ENCODE measurements at regions of chr19 and their contacts with region 1.

Region 1: DNA sequence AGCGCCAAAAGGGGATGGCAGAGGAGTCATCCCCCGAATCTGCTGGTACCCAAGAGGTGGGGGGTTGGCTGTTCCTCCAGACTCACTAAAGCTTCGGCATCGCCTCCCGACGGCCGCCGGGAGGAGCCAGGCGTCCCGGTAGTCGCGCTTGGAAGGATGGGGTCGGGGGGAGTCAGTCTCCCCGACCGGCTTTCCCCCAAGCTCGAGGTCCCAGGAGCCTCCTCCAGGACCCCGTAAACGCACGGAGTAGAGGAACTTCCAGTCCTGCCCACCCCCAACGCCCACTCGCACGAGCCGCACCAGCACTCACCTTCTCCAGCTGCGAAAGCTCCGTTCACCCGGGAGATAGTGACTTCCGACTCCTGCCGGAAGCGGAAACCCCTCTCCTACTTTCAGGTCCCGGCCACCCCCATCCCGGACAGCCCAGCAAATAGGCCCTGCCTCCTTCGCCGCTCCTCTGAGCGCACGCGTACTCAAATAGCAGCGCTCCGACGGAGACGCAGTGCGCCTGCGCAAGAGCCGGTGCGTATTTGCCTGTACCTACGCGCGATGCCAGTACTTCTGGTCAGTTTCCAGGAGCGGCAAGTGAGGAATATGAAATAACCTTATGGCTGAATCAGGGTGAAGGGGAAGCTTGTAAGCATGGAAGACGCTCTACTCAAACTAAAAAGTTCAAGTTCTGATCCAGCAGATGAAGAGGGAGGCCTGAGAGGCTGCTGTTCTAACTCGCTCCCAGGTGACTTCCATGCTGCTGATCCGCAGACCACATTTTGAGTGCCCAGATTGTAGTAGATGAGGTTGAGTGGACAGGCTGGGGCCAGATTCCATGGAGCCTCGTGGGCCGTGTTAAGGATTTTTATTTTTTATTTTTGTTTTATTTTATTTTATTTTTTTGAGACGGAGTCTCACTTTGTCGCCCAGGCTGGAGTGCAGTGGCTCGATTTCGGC is at the start of gene ELOF1:
- DNase-seq: peak; percentile 97 to 98 (median 98)
- H3K4me3 ChIP-seq: peak within 1 kb of the TSS; percentile 72 to 95 (median 88)
- H3K27ac ChIP-seq: peak within 1 kb of the TSS in 1 of 2 experiments; percentile 76
- H3K4me1 ChIP-seq: peaks cover 0 to 31% (median 21%) of the 10 kb centered on the region in 4 experiments
- H3K27me3 ChIP-seq: no peaks in the 10 kb centered on the region

Region 2: DNA sequence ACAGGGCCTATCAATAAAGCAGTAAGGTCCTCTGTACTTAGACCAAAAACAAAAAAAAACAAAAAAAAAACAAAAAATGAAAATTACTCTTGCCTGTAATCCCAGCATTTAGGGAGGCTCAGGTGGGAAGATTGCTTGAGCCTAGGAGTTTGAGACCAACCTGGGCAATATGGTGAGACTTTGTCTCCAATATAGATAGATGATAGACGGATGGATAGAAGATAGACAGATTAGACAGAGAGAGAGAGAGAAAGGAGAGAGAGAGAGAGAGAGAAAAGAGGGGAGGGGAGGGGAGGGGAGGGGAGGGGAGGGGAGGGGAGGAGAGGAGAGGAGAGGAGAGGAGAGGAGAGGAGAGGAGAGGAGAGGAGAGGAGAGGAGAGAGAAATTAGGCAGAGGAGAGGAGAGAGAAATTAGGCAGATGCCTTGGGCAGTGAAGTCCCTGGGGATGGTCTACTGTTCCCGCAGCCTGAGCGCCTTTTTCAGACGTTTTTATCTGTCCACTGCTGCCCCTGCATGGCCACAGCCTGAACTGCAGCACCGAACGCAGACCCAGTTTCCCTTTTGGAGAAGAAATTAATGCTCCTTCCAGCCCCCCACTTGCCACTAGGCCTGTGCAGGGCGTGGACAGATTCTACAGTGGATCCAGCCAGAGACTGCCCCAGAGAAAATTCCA is 28.3 kb after region 1 on chr19:
- CTCF ChIA-PET with region 1: interaction called, 109 read pairs
- POLR2A ChIA-PET with region 1: interaction called, 3 read pairs
- DNase-seq: peak; percentile 74 to 80 (median 76)
- H3K4me3 ChIP-seq: no peak overlapping the region
- H3K27ac ChIP-seq: no peak overlapping the region
- H3K4me1 ChIP-seq: peaks cover 3 to 37% (median 15%) of the 10 kb centered on the region in 4 experiments
- H3K27me3 ChIP-seq: peaks cover 0 to 2% (median 0%) of the 10 kb centered on the region in 5 experiments

Region 3: DNA sequence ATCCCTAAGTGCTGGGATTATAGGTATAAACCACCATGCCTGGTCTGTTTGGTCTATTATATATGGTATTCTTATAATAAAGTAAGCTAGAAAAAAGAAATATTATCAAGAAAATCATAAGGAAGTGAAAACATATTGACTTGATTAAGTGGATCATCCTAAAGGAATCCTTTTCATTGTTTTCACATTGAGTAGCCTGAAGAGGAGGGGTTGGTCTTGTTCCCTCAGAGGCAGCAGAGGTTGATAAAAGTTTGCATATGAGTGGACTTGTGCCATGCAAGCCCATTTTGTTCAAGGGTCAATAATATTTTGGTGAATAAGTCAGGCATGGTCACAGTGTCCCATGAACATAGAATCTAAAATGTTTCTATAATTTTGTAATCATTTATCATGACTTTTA is 90.8 kb after region 1 on chr19:
- CTCF ChIA-PET with region 1: no interaction called
- POLR2A ChIA-PET with region 1: no interaction called
- DNase-seq: no peak
- H3K4me3 ChIP-seq: no peak overlapping the region
- H3K27ac ChIP-seq: no peak overlapping the region
- H3K4me1 ChIP-seq: no peaks in the 10 kb centered on the region
- H3K27me3 ChIP-seq: no peaks in the 10 kb centered on the region